ENCODE measurements at regions of chr4 and their contacts with region 1.

Region 1: GRCh38 chr4:119314356-119314755 is 7.6 kb downstream of the FABP2 start:
- DNase-seq: peak in 1 of 3 donors; percentile 67
- ATAC-seq: peak; percentile 84
- H3K4me3 ChIP-seq: no peak overlapping the region
- H3K4me1 ChIP-seq: no peaks in the 10 kb centered on the region
- CTCF ChIP-seq: no peak

Region 2: DNA sequence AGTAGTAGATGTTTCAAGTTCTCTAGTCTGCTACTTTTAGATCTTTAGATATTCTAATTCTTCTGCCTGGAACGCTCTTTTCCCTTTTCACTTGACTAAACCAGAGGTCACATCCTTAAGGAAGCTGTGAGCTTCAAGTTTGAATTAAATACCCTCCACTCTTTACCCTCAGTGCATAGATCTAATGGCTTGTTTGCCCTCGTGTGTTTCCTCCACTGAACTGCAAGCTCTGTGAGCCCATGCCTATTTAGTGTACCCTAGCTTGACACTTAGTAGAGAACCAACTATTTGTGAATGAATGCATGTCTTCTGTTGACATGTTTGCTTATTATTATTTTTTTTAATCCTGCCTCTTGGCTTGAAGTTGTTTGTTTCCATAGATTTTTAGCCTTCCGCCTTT is 176.0 kb after region 1 on chr4:
- intact Hi-C with region 1: loop called in 1 of 2 experiments (anchors 10 kb)
- DNase-seq: peak in 1 of 3 donors; percentile 27
- ATAC-seq: peak; percentile 62
- H3K4me3 ChIP-seq: no peak overlapping the region
- H3K4me1 ChIP-seq: no peaks in the 10 kb centered on the region
- CTCF ChIP-seq: no peak

Region 3: GRCh38 chr4:119550857-119551532 is 236.6 kb after region 1 on chr4:
- intact Hi-C with region 1: no loop called
- DNase-seq: no peak
- ATAC-seq: no peak
- H3K4me3 ChIP-seq: no peak overlapping the region
- H3K4me1 ChIP-seq: no peaks in the 10 kb centered on the region
- CTCF ChIP-seq: no peak

Region 4: DNA sequence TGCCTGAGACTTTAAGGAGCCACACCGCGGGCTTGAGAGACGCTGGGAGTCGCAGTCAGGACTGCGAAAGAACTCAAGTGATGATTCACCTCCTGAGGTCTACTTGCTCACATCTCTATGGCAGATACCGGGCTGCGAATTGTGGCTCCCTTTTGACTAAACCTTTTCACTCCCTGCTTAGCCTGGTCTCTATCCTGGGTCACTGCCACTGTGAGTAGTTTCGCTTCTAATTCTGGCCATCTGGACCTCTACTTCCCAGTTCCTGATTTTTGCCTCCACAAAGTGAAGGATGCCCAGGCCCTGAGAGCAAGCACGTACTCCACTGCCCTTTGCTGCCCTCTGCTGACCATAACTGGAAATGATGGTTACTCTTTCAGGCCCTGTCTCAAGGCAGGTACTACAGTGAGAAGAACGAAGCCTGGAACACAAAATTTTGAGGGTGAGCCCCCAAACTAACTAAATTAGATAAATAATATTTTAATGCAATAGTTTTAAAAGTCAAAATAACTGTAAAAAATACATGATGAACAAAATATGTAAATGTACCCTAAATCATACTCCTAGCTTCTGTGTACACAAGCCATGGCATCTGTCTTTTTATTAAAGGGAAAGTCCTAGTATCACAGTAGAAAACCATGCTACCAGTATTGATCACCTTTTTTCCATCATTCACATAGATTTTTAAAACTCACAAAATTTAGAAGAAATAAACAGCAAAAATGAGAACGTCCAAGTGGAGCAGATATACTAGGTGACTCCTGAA is 735.6 kb after region 1 on chr4:
- intact Hi-C with region 1: loop called in 1 of 2 experiments (anchors 10 kb)
- DNase-seq: peak in 2 of 3 donors; percentile 49 to 95
- ATAC-seq: peak; percentile 99
- H3K4me3 ChIP-seq: no peak overlapping the region
- H3K4me1 ChIP-seq: no peaks in the 10 kb centered on the region
- CTCF ChIP-seq: peak; percentile 55

Region 5: GRCh38 chr4:120109406-120109805 is 795.0 kb after region 1 on chr4:
- intact Hi-C with region 1: no loop called
- DNase-seq: no peak
- ATAC-seq: no peak
- H3K4me3 ChIP-seq: no peak overlapping the region
- H3K4me1 ChIP-seq: no peaks in the 10 kb centered on the region
- CTCF ChIP-seq: no peak

Measured in mucosa of descending colon (tissue), 3 donors.